T-cell (primary cell): ENCODE measurements at regions of chr5 and their contacts with region 1.

Region 1: GRCh38 chr5:142012792-142013388 is at the start of gene GNPDA1:
- DNase-seq: peak in 34 of 35 experiments; percentile 20 to 82 (median 47)
- ATAC-seq: peak; percentile 71 to 79 (median 76)
- H3K4me3 ChIP-seq: peak within 1 kb of the TSS; percentile 69 to 78
- H3K4me3 Mint-ChIP-seq: peak within 1 kb of the TSS; percentile 78 to 87 (median 85)
- H3K27ac ChIP-seq: peak within 1 kb of the TSS; percentile 81
- H3K27ac Mint-ChIP-seq: peak within 1 kb of the TSS; percentile 93 to 95
- H3K4me1 ChIP-seq: peaks cover 23 to 63% of the 10 kb centered on the region in 2 experiments
- H3K4me1 Mint-ChIP-seq: peaks cover 53 to 78% (median 63%) of the 10 kb centered on the region in 3 donors
- H3K27me3 ChIP-seq: no peaks in the 10 kb centered on the region
- H3K27me3 Mint-ChIP-seq: no peaks in the 10 kb centered on the region
- total RNA-seq, gene GNPDA1: 12.6 to 30.3 (median 29.3) TPM

Region 2: DNA sequence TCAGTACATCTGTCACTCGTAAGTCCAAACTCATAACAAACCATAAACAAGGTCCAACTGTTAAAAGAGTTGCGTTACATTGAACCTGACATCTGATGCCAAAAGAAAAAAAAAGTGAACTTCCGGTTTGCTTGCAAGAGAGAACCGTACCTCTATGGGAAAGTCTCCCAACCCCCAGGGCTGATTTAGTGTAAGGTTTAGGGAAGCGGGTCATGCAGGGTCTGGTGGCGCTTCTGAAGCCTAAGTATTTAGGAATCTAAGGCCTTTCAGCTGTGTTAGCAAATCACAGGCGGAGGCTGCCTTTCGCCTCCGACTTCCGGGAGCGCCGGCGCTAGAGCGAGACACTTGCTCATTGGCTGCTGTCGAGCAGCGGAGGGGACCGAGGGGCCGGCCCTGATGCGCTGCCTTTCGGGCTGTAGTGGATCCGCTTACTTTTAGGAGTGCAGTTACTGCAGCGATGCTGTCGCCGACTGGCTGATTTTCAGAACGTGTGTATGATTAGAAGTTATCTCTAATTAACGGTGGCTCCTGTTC is 11.9 kb after region 1 on chr5:
- CTCF ChIA-PET with region 1: interaction called, 10 to 14 read pairs
- POLR2A ChIA-PET with region 1: interaction called in 1 of 2 experiments, 7 read pairs
- DNase-seq: peak; percentile 66 to 88 (median 80)
- ATAC-seq: peak; percentile 100
- H3K4me3 ChIP-seq: peak overlapping the region; percentile 44 to 54
- H3K4me3 Mint-ChIP-seq: peak overlapping the region; percentile 82 to 84 (median 83)
- H3K27ac ChIP-seq: peak overlapping the region; percentile 84
- H3K27ac Mint-ChIP-seq: peak overlapping the region; percentile 98
- H3K4me1 ChIP-seq: peaks cover 3 to 5% of the 10 kb centered on the region in 2 experiments
- H3K4me1 Mint-ChIP-seq: peaks cover 17 to 20% (median 18%) of the 10 kb centered on the region in 3 donors
- H3K27me3 ChIP-seq: peaks cover 0 to 3% of the 10 kb centered on the region in 2 experiments
- H3K27me3 Mint-ChIP-seq: no peaks in the 10 kb centered on the region

Region 3: GRCh38 chr5:142108432-142109330 is 95.8 kb after region 1 on chr5 and contains the start of gene NDFIP1:
- CTCF ChIA-PET with region 1: interaction called in 1 of 2 experiments, 48 read pairs
- POLR2A ChIA-PET with region 1: interaction called in 1 of 2 experiments, 5 read pairs
- DNase-seq: peak; percentile 68 to 91 (median 80)
- ATAC-seq: peak; percentile 80 to 94 (median 93)
- H3K4me3 ChIP-seq: peak within 1 kb of the TSS; percentile 88 to 89
- H3K4me3 Mint-ChIP-seq: peak within 1 kb of the TSS; percentile 92 to 99 (median 94)
- H3K27ac ChIP-seq: peak within 1 kb of the TSS; percentile 92
- H3K27ac Mint-ChIP-seq: peak within 1 kb of the TSS; percentile 95 to 98
- H3K4me1 ChIP-seq: peaks cover 45 to 52% of the 10 kb centered on the region in 2 experiments
- H3K4me1 Mint-ChIP-seq: peaks cover 70 to 86% (median 80%) of the 10 kb centered on the region in 3 donors
- H3K27me3 ChIP-seq: no peaks in the 10 kb centered on the region
- H3K27me3 Mint-ChIP-seq: no peaks in the 10 kb centered on the region
- total RNA-seq, gene NDFIP1: 76.3 to 194 (median 90.8) TPM

Region 4: GRCh38 chr5:142145106-142145900 is 132.4 kb after region 1 on chr5:
- CTCF ChIA-PET with region 1: interaction called, 7 to 24 read pairs
- POLR2A ChIA-PET with region 1: interaction called in 1 of 2 experiments, 6 read pairs
- DNase-seq: peak in 34 of 35 experiments; percentile 28 to 76 (median 52)
- ATAC-seq: peak; percentile 64 to 86 (median 80)
- H3K4me3 ChIP-seq: no peak overlapping the region
- H3K4me3 Mint-ChIP-seq: no peak overlapping the region
- H3K27ac ChIP-seq: no peak overlapping the region
- H3K27ac Mint-ChIP-seq: no peak overlapping the region
- H3K4me1 ChIP-seq: no peaks in the 10 kb centered on the region
- H3K4me1 Mint-ChIP-seq: peaks cover 0 to 16% (median 7%) of the 10 kb centered on the region in 3 donors
- H3K27me3 ChIP-seq: no peaks in the 10 kb centered on the region
- H3K27me3 Mint-ChIP-seq: no peaks in the 10 kb centered on the region